Ascending aorta (tissue), 2 donors: ENCODE measurements at regions of chr14 and their contacts with region 1.

Region 1: GRCh38 chr14:67943947-67944346 is 124.4 kb downstream of the RAD51B start:
- DNase-seq: peak; percentile 12 to 91
- H3K4me3 ChIP-seq: no peak overlapping the region
- H3K27ac ChIP-seq: peak overlapping the region; percentile 41 to 66
- H3K4me1 ChIP-seq: peaks cover 18 to 44% of the 10 kb centered on the region in 2 donors
- H3K27me3 ChIP-seq: no peaks in the 10 kb centered on the region
- CTCF ChIP-seq: peak; percentile 57 to 91 (median 79)

Region 2: GRCh38 chr14:68140111-68140741 is 196.3 kb after region 1 on chr14:
- intact Hi-C with region 1: loop called (anchors 5 kb)
- DNase-seq: peak in 1 of 2 donors; percentile 83
- H3K4me3 ChIP-seq: no peak overlapping the region
- H3K27ac ChIP-seq: peak overlapping the region; percentile 68 to 76
- H3K4me1 ChIP-seq: peaks cover 0 to 47% of the 10 kb centered on the region in 2 donors
- H3K27me3 ChIP-seq: no peaks in the 10 kb centered on the region
- CTCF ChIP-seq: no peak

Region 3: DNA sequence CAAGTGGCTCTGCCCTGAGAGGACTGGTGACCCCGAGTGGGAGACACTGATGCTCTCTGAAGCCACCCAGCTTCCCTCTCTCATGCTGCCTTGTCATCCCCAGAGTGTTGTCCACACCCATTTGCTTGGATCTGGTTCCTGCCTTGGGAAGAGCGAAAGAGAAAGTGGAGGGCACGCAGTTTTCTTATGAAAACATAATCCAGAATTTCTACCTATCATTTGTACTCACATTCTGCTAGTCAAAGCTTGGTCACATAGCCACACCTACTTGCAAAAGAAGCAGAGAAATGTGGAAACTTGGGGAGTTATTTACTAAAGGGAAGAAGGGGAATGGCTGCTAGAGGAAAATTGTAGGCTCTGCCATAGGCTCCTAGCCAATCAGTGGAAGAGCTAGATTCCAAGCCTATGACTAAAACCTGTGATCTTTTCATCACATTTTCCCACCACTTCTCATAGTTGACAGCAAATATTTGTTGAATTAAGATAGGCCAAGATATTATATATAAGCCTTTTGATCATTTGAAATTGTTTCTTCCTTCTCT is 522.6 kb after region 1 on chr14:
- intact Hi-C with region 1: loop called (anchors 5 kb)
- DNase-seq: peak in 1 of 2 donors; percentile 66
- H3K4me3 ChIP-seq: no peak overlapping the region
- H3K27ac ChIP-seq: peak overlapping the region; percentile 6 to 33
- H3K4me1 ChIP-seq: peaks cover 3 to 20% of the 10 kb centered on the region in 2 donors
- H3K27me3 ChIP-seq: no peaks in the 10 kb centered on the region
- CTCF ChIP-seq: no peak

Region 4: DNA sequence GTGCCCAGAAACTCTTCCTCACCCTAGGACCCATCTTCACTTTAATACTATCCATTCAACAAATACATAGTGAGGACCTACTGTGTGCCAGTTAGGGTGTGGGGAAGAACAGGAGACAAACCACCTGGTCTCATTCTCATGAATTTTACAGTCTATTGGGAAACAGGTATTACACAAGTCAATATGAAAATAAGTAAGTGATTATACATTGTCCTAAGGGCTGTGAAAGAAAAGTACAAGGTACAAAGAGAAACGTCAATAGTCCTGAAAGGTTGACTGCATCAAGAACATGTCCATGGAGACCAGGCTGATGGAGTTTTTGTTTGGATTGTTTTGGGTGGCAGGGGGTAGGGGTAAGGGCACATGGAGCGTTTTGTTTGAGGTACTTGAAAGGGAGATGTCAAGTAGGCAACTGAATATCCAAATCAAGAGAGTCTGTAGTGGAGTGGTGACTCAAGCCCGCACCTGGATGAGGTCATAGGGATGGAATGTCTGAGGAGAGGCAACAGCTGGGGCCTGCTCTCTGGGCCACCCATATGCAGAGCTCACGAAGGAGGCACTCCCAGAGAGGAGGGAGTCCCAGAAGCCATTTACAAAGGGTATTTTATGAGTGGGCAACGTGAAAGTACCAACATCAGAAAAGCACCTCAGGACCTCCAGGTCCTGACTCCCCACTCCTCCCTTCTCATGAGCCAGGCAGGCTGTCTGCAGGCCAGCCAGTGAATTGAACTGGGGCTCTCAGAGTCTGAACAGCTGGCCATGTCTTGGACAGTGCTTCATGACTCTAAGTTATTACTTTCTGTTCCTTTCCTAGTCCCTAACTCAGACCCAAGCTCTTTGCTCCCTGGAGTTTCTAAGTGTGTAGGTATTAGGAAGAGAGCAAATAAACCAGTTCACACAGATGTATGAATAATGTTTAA is 577.0 kb after region 1 on chr14:
- intact Hi-C with region 1: loop called (anchors 5 kb)
- DNase-seq: no peak
- H3K4me3 ChIP-seq: no peak overlapping the region
- H3K27ac ChIP-seq: peak overlapping the region; percentile 77 to 78
- H3K4me1 ChIP-seq: peaks cover 15 to 48% of the 10 kb centered on the region in 2 donors
- H3K27me3 ChIP-seq: no peaks in the 10 kb centered on the region
- CTCF ChIP-seq: no peak

Region 5: GRCh38 chr14:68682166-68683103 is 738.5 kb after region 1 on chr14:
- intact Hi-C with region 1: loop called (anchors 5 kb)
- DNase-seq: peak; percentile 41 to 81
- H3K4me3 ChIP-seq: no peak overlapping the region
- H3K27ac ChIP-seq: peak overlapping the region; percentile 65 to 84
- H3K4me1 ChIP-seq: peaks cover 13 to 40% of the 10 kb centered on the region in 2 donors
- H3K27me3 ChIP-seq: no peaks in the 10 kb centered on the region
- CTCF ChIP-seq: no peak

Region 6: GRCh38 chr14:68695326-68695768 is 751.4 kb after region 1 on chr14:
- intact Hi-C with region 1: loop called (anchors 5 kb)
- DNase-seq: peak; percentile 56 to 87
- H3K4me3 ChIP-seq: no peak overlapping the region
- H3K27ac ChIP-seq: peak overlapping the region; percentile 73 to 85
- H3K4me1 ChIP-seq: peaks cover 0 to 16% of the 10 kb centered on the region in 2 donors
- H3K27me3 ChIP-seq: no peaks in the 10 kb centered on the region
- CTCF ChIP-seq: no peak

Region 7: GRCh38 chr14:68795597-68796417 is 851.9 kb after region 1 on chr14:
- intact Hi-C with region 1: loop called (anchors 2 kb)
- DNase-seq: peak in 1 of 2 donors; percentile 92
- H3K4me3 ChIP-seq: peak overlapping the region; percentile 77 to 92
- H3K27ac ChIP-seq: peak overlapping the region; percentile 100
- H3K4me1 ChIP-seq: peaks cover 0 to 10% of the 10 kb centered on the region in 2 donors
- H3K27me3 ChIP-seq: no peaks in the 10 kb centered on the region
- CTCF ChIP-seq: peak; percentile 91 to 94 (median 92)